A549 (cell line): ENCODE measurements at regions of chr9 and their contacts with region 1.

Region 1: DNA sequence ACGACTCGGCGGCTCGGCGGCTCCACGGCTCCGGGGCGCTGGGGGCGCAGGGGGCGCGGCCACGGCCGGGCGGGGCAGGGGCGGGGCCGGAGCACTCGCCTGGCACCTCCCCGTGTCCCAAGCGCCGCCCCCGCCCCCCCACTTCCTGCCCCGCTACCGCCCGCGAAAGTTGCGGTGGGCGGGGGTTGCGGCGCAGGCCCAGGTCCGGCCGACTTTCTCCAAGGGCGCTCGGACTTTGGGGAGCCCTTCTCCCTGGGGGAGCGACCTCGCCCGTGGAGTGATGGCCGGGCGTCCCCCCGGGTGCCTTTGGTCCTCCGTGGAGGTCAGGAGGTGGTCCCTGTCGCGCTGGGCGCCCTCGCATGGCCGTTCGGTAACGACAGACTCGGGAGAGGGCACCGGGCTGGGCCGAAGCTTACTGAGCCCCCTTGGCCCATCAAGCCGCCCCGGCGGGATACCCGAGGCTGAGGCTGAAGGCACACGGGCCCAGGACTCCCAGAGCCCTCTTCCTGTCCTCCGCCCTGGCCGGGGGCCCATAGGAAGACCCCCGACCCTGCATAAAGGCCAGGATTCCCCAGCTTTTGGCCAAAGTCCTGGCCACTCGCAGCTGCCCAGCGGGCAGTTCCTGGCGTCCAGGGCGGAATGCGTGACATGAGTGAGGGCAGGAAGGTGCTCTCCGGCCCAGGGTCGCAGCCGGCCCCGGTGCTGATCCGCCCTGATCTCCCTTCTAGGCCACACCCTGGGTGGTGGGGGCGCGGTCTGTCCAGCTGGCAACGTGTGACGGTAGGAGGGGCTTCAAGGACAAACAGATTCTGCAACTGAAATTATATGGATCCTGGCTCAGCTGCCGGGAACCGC is 883 bp upstream of the VAV2 start:
- DNase-seq: peak; percentile 64 to 84
- ATAC-seq: peak; percentile 53 to 82
- H3K4me3 ChIP-seq: peak overlapping the region; percentile 98
- H3K27ac ChIP-seq: peak overlapping the region; percentile 98 to 99
- H3K4me1 ChIP-seq: peaks cover 38% of the 10 kb centered on the region
- CTCF ChIP-seq: peak; percentile 64; the same call in 2 of the 3 replicates
- EP300 ChIP-seq: no peak
- POLR2A ChIP-seq: peak; percentile 62
- RAD21 ChIP-seq: peak in 1 of 2 experiments; percentile 46; a peak in 2 of 5 replicates

Region 2: DNA sequence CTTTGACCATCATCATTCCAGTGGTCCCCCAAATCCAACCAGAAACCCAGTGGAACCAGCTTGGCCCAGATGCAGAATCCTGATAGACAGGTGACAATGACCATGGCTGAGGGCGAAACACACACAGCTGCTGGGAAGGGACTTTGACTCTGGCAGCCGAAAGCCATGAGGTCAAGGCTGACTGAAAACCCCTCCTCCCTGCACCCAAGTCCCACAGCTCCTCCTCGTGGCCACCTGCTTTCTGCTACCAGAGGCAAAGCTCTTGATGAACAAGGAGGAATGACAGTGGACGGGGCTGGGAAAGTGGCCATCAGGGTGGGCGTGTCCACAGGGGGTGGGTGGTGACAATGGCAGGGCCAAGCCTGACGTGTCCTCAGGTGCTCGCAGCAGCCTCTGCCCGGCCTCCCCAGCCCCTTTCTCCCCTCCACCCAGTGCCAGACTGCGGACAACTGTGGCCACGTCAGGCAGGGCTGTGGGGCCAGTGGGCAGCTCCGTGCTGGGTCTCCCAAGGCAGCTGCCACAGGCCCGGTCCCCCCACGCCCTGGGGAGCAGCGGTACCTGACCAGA is 224.1 kb before region 1 on chr9:
- CTCF ChIA-PET with region 1: interaction called, 348 read pairs
- POLR2A ChIA-PET with region 1: no interaction called
- DNase-seq: peak in 1 of 2 experiments; percentile 25
- ATAC-seq: peak; percentile 21 to 45; a peak in 3 of 6 replicates
- H3K4me3 ChIP-seq: no peak overlapping the region
- H3K27ac ChIP-seq: no peak overlapping the region
- H3K4me1 ChIP-seq: no peaks in the 10 kb centered on the region
- CTCF ChIP-seq: no peak
- EP300 ChIP-seq: no peak
- POLR2A ChIP-seq: no peak
- RAD21 ChIP-seq: no peak

Region 3: DNA sequence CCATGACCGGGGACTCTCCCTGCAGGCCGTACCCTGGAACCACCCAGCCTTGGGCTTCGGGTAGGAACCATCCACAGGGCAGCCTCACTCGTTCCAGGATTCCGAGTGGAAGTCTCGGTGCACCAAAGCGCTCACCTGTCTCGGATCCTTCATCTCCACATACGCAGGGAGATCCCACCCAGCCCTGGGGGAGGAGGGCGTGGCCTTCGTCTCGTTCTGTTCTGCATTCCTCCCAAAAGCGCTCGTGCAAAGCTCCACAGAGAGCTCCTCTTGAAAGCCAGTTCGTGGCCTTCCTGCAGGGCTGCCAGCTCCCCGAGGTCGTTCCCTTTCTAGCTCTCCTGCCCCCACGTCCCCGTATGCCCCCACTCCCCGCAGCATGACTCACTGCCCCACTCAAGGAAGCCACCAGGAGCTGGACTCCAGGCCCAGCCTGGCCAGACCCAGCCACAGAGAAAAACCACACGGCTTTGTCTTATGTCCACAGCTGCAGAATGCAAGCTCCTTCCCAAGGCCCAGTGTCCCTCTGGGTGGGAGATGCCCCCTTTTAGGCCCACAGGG is 189.9 kb before region 1 on chr9:
- CTCF ChIA-PET with region 1: interaction called, 188 read pairs
- POLR2A ChIA-PET with region 1: no interaction called
- DNase-seq: no peak
- ATAC-seq: no peak
- H3K4me3 ChIP-seq: no peak overlapping the region
- H3K27ac ChIP-seq: no peak overlapping the region
- H3K4me1 ChIP-seq: no peaks in the 10 kb centered on the region
- CTCF ChIP-seq: no peak
- EP300 ChIP-seq: no peak
- POLR2A ChIP-seq: no peak
- RAD21 ChIP-seq: no peak

Region 4: DNA sequence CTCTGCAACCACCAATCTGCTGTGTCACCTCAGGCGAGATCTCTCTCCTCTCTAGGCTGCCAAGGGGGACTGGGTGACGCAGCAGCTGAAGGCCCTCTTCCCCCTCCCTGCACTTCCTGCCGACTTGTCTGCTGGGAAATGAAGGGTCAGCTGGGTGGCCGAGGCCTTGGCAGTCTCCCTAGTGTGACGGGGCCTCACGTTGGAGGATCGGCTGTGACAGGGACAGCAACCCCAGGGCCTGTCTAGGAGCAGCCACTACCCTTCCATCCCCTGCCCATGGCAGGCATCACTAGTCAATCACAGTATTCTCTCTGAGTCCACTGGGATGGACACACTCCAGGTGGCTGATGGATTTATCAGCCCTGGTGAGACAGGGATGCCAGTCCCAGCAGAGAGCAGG is 147.6 kb before region 1 on chr9:
- CTCF ChIA-PET with region 1: interaction called, 20 read pairs
- POLR2A ChIA-PET with region 1: no interaction called
- DNase-seq: no peak
- ATAC-seq: peak in 1 of 2 experiments; percentile 23; a peak in 3 of 6 replicates
- H3K4me3 ChIP-seq: no peak overlapping the region
- H3K27ac ChIP-seq: peak overlapping the region in 1 of 2 experiments; percentile 14; a peak in 1 of 6 replicates
- H3K4me1 ChIP-seq: no peaks in the 10 kb centered on the region
- CTCF ChIP-seq: no peak
- EP300 ChIP-seq: no peak
- POLR2A ChIP-seq: no peak
- RAD21 ChIP-seq: no peak

Region 5: GRCh38 chr9:133961226-133962165 is 31.5 kb before region 1 on chr9:
- CTCF ChIA-PET with region 1: interaction called, 18 read pairs
- POLR2A ChIA-PET with region 1: no interaction called
- DNase-seq: no peak
- ATAC-seq: 0 out of 6 replicates have a peak, but pooled peaks of 1 of the 2 experiments have one; percentile 15
- H3K4me3 ChIP-seq: no peak overlapping the region
- H3K27ac ChIP-seq: no peak overlapping the region
- H3K4me1 ChIP-seq: peaks cover 6% of the 10 kb centered on the region; the same call in 1 of the 3 replicates
- CTCF ChIP-seq: no peak
- EP300 ChIP-seq: no peak
- POLR2A ChIP-seq: no peak
- RAD21 ChIP-seq: no peak

Region 6: GRCh38 chr9:134010310-134011173 is 17.5 kb after region 1 on chr9:
- CTCF ChIA-PET with region 1: interaction called, 56 read pairs
- POLR2A ChIA-PET with region 1: no interaction called
- DNase-seq: no peak
- ATAC-seq: no peak
- H3K4me3 ChIP-seq: no peak overlapping the region
- H3K27ac ChIP-seq: no peak overlapping the region
- H3K4me1 ChIP-seq: no peaks in the 10 kb centered on the region
- CTCF ChIP-seq: no peak
- EP300 ChIP-seq: no peak
- POLR2A ChIP-seq: no peak
- RAD21 ChIP-seq: no peak